ENCODE measurements at regions of chr15 and their contacts with region 1.

Region 1: GRCh38 chr15:69452692-69453521 is at the start of gene RPLP1:
- DNase-seq: peak; percentile 97
- ATAC-seq: peak; percentile 80
- H3K4me3 Mint-ChIP-seq: peak within 1 kb of the TSS; percentile 99
- H3K27ac Mint-ChIP-seq: peak within 1 kb of the TSS; percentile 98
- H3K4me1 Mint-ChIP-seq: peaks cover 39% of the 10 kb centered on the region
- H3K27me3 Mint-ChIP-seq: no peaks in the 10 kb centered on the region
- total RNA-seq, gene RPLP1: 1,664 to 1,767 TPM

Region 2: GRCh38 chr15:69413822-69414700 is 38.8 kb before region 1 on chr15 and contains the start of gene KIF23:
- CTCF ChIA-PET with region 1: interaction called, 5 read pairs
- POLR2A ChIA-PET with region 1: interaction called, 26 read pairs
- DNase-seq: peak; percentile 97
- ATAC-seq: peak; percentile 98
- H3K4me3 Mint-ChIP-seq: peak within 1 kb of the TSS; percentile 89
- H3K27ac Mint-ChIP-seq: peak within 1 kb of the TSS; percentile 90
- H3K4me1 Mint-ChIP-seq: peaks cover 31% of the 10 kb centered on the region
- H3K27me3 Mint-ChIP-seq: peaks cover 8% of the 10 kb centered on the region
- total RNA-seq, gene KIF23: 80.7 to 87.9 TPM

Region 3: GRCh38 chr15:69434236-69434635 is 18.7 kb before region 1 on chr15:
- CTCF ChIA-PET with region 1: interaction called, 5 read pairs
- POLR2A ChIA-PET with region 1: interaction called, 12 read pairs
- DNase-seq: no peak
- ATAC-seq: no peak
- H3K4me3 Mint-ChIP-seq: no peak overlapping the region
- H3K27ac Mint-ChIP-seq: no peak overlapping the region
- H3K4me1 Mint-ChIP-seq: no peaks in the 10 kb centered on the region
- H3K27me3 Mint-ChIP-seq: no peaks in the 10 kb centered on the region

Region 4: DNA sequence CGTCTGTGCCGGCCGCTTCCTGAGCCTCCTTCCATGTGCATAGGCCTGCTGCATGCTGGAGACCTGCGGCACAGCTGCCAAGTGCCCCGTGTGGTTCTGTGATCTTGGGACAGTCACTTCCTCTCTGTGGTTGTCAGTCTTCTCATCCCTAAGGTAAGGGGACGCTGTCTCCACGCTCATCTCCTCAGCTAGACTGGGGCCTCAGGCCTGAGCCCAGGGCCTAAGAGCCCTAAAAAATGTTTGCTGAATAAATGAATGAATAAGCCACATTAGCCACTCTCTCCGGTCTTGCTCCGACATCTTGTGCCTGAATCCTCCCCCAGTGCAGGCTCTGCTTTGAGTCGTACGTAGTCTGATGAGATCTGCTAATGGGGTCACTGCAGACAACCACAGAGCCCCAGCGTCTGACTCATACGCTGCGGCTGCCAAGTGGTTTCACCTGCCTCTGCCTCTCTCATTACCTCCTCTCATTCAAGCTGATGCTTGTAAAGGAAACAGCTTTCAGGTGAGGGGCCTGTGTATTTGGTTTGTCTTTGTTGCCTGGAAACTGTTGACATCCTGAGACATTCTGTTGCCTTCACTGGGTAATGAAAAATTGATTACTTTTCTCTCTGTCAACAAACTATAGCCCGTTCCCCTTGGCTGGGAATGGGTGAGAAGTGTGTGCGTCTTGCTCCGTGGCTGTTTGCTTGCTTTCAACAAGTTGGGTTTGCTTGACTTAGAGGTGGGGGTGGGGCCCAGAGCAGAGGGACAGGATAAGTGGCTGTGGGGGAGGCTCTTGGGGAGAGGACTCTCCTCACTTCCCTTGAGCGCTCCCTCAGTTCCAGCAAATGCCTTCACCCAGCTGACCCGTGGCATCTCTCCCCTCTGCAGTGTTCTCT is 15.6 kb after region 1 on chr15:
- CTCF ChIA-PET with region 1: interaction called, 91 read pairs
- POLR2A ChIA-PET with region 1: interaction called, 83 read pairs
- DNase-seq: peak; percentile 93
- ATAC-seq: peak; percentile 95
- H3K4me3 Mint-ChIP-seq: peak overlapping the region; percentile 59
- H3K27ac Mint-ChIP-seq: peak overlapping the region; percentile 92
- H3K4me1 Mint-ChIP-seq: peaks cover 39% of the 10 kb centered on the region
- H3K27me3 Mint-ChIP-seq: peaks cover 28% of the 10 kb centered on the region

Measured in activated CD8-positive, alpha-beta T cell treated with anti-CD3 and anti-CD28 coated beads, Interleukin-2, amount 10 ng/mL, durations not matched to agents 7 days and 5 days (primary cell).